ENCODE measurements at regions of chr6 and their contacts with region 1.

Region 1: DNA sequence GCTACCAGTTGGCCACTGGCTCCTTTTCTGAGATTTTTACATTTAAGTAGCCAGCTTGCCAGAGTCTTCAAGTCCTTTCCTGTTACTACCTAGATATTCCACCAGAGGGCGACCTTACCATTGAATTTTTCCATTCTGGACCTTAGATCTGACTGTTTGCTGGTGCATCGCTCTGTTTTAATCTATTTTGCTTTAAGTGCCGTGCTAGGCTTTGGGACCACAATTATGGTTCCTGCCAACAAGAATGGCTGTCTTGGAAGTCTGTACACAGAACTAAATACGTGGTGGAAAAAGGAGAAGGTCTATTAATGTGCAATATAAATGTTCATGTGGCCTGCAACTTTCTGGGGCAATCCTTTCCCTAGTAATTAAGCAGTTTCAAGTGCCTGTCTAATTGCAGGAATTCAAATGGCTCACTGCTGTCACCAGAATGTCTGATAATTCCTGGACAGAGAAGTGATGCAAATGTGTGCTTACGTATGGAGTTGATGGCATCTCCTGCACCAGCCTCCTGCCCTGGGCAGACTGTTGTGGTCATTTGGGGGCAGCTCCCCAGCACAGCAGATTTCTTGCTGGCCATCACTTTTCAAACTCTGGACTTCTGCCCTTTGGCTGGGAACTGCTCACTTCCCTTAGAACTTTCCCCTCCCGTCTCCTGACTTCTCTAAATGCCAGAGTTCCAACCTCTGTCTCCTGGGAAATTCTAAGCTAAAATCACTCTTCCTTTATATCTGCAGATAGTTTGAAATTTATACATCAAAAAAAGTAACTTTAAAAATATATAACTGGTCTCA is 5.6 kb upstream of the HLA-DOA start:
- DNase-seq: peak; percentile 37
- H3K4me3 ChIP-seq: no peak overlapping the region
- H3K27ac ChIP-seq: no peak overlapping the region
- H3K4me1 ChIP-seq: peaks cover 0 to 24% (median 12%) of the 10 kb centered on the region in 4 donors
- H3K27me3 ChIP-seq: peaks cover 42% of the 10 kb centered on the region
- CTCF ChIP-seq: peak; percentile 77 to 89 (median 84)
- EP300 ChIP-seq: no peak
- POLR2A ChIP-seq: no peak

Region 2: GRCh38 chr6:33075568-33076405 is 60.7 kb after region 1 on chr6 and contains the start of gene HLA-DPB1:
- in situ Hi-C with region 1: loop called (anchors 10 kb)
- intact Hi-C with region 1: loop called (anchors 5 kb)
- DNase-seq: no peak
- H3K4me3 ChIP-seq: peak within 1 kb of the TSS in 3 of 4 donors; percentile 14 to 33 (median 14)
- H3K27ac ChIP-seq: peak within 1 kb of the TSS; percentile 48 to 76 (median 67)
- H3K4me1 ChIP-seq: peaks cover 0 to 6% (median under 1%) of the 10 kb centered on the region in 4 donors
- H3K27me3 ChIP-seq: peaks cover 12% of the 10 kb centered on the region
- CTCF ChIP-seq: no peak
- EP300 ChIP-seq: no peak
- POLR2A ChIP-seq: peak; percentile 54
- total RNA-seq, gene HLA-DPB1: 10.0 to 68.0 (median 40.4) TPM

Region 3: DNA sequence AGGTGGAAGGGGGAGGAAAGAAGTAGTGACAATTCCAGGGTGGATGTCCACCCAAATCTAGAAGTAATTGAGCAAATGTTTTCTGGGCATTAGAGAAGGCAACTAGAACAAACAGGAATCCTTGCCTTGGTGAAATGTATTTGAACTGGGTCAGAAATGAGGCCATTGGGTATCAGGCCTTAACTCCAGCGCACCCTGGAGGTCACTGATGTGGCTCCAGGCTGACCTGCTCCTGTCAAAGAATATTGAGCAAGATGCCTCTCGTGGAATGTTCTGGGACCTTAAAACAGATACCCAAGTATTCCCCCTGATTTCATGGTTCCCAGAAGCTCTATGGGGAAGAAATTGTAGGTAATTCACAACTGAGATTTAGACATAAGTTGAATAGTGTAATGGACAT is 67.7 kb after region 1 on chr6:
- in situ Hi-C with region 1: loop called (anchors 10 kb)
- intact Hi-C with region 1: loop called (anchors 5 kb)
- DNase-seq: peak; percentile 35
- H3K4me3 ChIP-seq: no peak overlapping the region
- H3K27ac ChIP-seq: peak overlapping the region in 1 of 4 donors; percentile 17
- H3K4me1 ChIP-seq: peaks cover 0 to 19% (median 7%) of the 10 kb centered on the region in 4 donors
- H3K27me3 ChIP-seq: peaks cover 13% of the 10 kb centered on the region
- CTCF ChIP-seq: peak in 3 of 5 experiments; percentile 26 to 56 (median 51)
- EP300 ChIP-seq: no peak
- POLR2A ChIP-seq: no peak

Measured in transverse colon (tissue), 4 donors.